H1 (cell line): ENCODE measurements at regions of chr5 and their contacts with region 1.

Region 1: DNA sequence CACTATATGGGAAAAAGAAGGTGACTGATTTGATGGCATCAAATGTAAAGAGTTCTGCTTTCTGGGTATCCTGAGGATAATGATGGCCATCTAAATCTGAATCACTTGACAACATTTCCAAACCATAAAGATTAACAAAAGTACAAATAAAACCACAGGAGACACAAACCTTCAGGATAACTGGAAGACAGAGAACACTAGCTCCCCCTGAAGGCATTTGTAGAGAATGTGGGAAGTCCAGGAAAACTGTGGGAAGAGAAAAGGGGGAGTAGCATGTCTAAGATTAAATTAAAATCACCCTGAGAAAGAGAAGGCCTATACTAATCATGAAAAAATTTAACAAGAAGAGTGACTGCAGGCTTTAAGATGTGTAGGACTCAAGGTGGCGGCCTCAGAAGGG is 116.2 kb downstream of the PRELID2 start:
- DNase-seq: no peak
- H3K4me3 ChIP-seq: no peak overlapping the region
- H3K27ac ChIP-seq: no peak overlapping the region
- H3K4me1 ChIP-seq: no peaks in the 10 kb centered on the region
- H3K27me3 ChIP-seq: no peaks in the 10 kb centered on the region
- CTCF ChIP-seq: peak in 2 of 3 experiments; percentile 41 to 62; a peak in 2 of 4 replicates
- EP300 ChIP-seq: no peak
- POLR2A ChIP-seq: no peak
- RAD21 ChIP-seq: peak; percentile 67 to 69

Region 2: GRCh38 chr5:145531038-145531734 is 187.8 kb before region 1 on chr5:
- CTCF ChIA-PET with region 1: no interaction called
- POLR2A ChIA-PET with region 1: no interaction called
- DNase-seq: no peak
- H3K4me3 ChIP-seq: no peak overlapping the region
- H3K27ac ChIP-seq: no peak overlapping the region; the same call in 1 of the 2 replicates
- H3K4me1 ChIP-seq: no peaks in the 10 kb centered on the region
- H3K27me3 ChIP-seq: no peaks in the 10 kb centered on the region
- CTCF ChIP-seq: no peak
- EP300 ChIP-seq: no peak
- POLR2A ChIP-seq: no peak
- RAD21 ChIP-seq: no peak

Region 3: GRCh38 chr5:145629047-145629446 is 89.9 kb before region 1 on chr5:
- CTCF ChIA-PET with region 1: no interaction called
- POLR2A ChIA-PET with region 1: no interaction called
- DNase-seq: no peak
- H3K4me3 ChIP-seq: no peak overlapping the region
- H3K27ac ChIP-seq: no peak overlapping the region
- H3K4me1 ChIP-seq: no peaks in the 10 kb centered on the region
- H3K27me3 ChIP-seq: no peaks in the 10 kb centered on the region
- CTCF ChIP-seq: no peak
- EP300 ChIP-seq: no peak
- POLR2A ChIP-seq: no peak
- RAD21 ChIP-seq: no peak

Region 4: GRCh38 chr5:145704724-145705123 is 14.2 kb before region 1 on chr5:
- CTCF ChIA-PET with region 1: interaction called, 31 read pairs
- POLR2A ChIA-PET with region 1: no interaction called
- DNase-seq: no peak
- H3K4me3 ChIP-seq: no peak overlapping the region
- H3K27ac ChIP-seq: no peak overlapping the region
- H3K4me1 ChIP-seq: no peaks in the 10 kb centered on the region
- H3K27me3 ChIP-seq: no peaks in the 10 kb centered on the region
- CTCF ChIP-seq: no peak
- EP300 ChIP-seq: no peak
- POLR2A ChIP-seq: no peak
- RAD21 ChIP-seq: no peak

Region 5: GRCh38 chr5:145743396-145744061 is 24.6 kb after region 1 on chr5:
- CTCF ChIA-PET with region 1: no interaction called
- POLR2A ChIA-PET with region 1: no interaction called
- DNase-seq: no peak
- H3K4me3 ChIP-seq: no peak overlapping the region
- H3K27ac ChIP-seq: no peak overlapping the region
- H3K4me1 ChIP-seq: no peaks in the 10 kb centered on the region
- H3K27me3 ChIP-seq: no peaks in the 10 kb centered on the region
- CTCF ChIP-seq: no peak
- EP300 ChIP-seq: no peak
- POLR2A ChIP-seq: no peak
- RAD21 ChIP-seq: no peak